Mucosa of descending colon (tissue), 3 donors: ENCODE measurements at regions of chr22 and their contacts with region 1.

Region 1: GRCh38 chr22:23385291-23386244 is 194.5 kb downstream of the IGLL1 start:
- DNase-seq: peak; percentile 81 to 92 (median 90)
- ATAC-seq: peak; percentile 93
- H3K4me3 ChIP-seq: no peak overlapping the region
- H3K4me1 ChIP-seq: peaks cover 4% of the 10 kb centered on the region
- CTCF ChIP-seq: peak; percentile 100

Region 2: DNA sequence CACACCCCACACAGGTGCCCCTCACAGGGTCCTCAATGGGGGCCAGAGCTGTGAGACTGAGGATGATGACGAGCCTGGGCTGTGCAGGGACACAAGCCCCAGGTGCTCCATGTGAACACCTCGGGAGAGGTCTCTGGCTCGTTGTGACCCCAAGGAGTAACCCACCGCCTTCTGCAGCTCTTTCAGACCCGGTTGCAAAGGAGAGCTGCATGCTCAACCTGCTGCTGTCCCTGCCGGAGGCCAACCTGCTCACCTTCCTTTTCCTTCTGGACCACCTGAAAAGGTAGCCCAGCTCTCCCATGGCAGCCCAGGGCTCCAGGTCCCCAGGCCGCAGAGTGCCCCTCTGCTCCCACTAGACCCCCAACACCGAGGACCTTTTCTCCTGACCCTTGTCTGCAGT is 71.8 kb before region 1 on chr22:
- intact Hi-C with region 1: loop called in 1 of 2 experiments (anchors 5 kb)
- DNase-seq: no peak
- ATAC-seq: no peak
- H3K4me3 ChIP-seq: no peak overlapping the region
- H3K4me1 ChIP-seq: no peaks in the 10 kb centered on the region
- CTCF ChIP-seq: no peak